Right ventricle myocardium superior (tissue), 1 donor: ENCODE measurements at regions of chr9 and their contacts with region 1.

Region 1: GRCh38 chr9:19048966-19049916 is at the start of gene RRAGA:
- DNase-seq: peak; percentile 97
- ATAC-seq: peak; percentile 98
- total RNA-seq, gene RRAGA: 69.4 TPM

Region 2: DNA sequence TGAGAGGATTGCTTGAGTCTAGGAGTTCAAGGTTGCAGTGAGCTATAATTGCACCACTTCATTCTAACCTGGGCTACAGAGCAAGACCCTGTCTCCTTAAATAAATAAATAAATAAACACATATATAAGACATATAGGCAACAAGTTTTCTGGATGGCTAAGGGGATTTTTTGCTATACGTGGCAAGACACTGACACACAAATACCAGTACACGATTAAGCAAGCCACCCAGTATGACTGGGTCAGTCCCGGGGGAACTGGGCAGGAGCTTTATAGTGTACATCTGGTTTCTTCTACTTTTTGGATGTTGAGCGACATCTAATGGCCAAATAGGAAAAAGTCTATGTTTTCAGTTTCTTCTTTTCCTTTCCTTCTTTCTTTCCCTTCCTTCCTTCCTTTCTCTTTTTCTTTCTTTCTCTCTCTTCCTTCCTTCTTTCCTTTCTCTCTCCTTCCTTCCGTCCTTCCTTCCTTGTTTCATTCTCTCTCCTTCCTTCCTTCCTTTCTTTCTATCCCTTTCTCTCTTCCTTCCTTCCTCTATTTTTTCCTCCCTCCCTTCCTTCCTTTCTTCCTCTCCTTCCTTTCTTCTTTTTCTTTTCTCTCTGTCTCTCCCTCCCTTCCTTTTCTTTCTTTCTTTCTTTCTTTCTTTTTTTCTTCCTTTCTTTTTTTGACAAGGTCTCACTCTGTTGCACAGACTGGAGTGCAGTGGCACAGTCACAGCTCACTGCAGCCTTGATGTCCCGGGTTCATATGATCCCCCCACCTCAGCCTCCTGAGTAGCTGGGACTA is 125.1 kb after region 1 on chr9:
- intact Hi-C with region 1: loop called (anchors 10 kb)
- DNase-seq: peak; percentile 77
- ATAC-seq: peak; percentile 92